OCI-LY7 (cell line): ENCODE measurements at regions of chr11 and their contacts with region 1.

Region 1: DNA sequence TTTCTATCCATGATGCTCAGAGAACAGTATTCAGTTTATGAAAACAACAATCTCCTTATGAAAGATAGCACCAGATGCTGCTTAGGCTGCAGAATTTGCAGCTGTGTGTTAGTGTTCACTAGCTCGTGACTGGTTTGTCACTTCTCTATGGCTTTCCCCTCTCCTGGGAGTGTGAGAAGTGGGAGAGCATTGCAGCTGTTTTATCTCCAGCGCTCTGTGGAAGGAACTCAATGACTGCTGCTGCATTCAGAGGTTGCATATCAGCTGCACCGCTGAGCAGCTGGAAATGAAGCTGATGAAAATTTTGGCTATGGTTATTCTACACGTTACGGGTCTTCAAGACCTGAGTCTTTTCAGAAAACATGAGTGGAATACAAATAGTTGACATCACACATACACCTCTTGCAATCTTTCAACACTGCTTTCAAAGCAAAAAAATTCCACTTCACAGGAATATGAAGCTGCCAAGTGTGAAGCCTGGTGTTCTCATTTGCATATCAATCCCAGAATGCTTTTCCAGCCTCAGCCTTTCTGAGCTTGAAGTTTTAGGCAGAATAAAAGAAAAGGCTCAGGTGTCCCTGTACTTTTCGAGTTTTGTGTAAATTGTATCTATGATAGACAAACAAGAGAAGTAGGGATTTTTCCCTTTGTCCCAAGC is 149.3 kb upstream of the DDI1 start:
- DNase-seq: peak; percentile 82
- H3K4me3 ChIP-seq: peak overlapping the region; percentile 31
- H3K27ac ChIP-seq: peak overlapping the region; percentile 46
- H3K4me1 ChIP-seq: peaks cover 31% of the 10 kb centered on the region
- CTCF ChIP-seq: no peak

Region 2: GRCh38 chr11:103875855-103876510 is 11.1 kb before region 1 on chr11:
- CTCF ChIA-PET with region 1: interaction called, 3 read pairs
- POLR2A ChIA-PET with region 1: interaction called, 23 read pairs
- intact Hi-C with region 1: no loop called
- DNase-seq: peak; percentile 70
- H3K4me3 ChIP-seq: no peak overlapping the region
- H3K27ac ChIP-seq: peak overlapping the region; percentile 47
- H3K4me1 ChIP-seq: peaks cover 23% of the 10 kb centered on the region
- CTCF ChIP-seq: no peak

Region 3: GRCh38 chr11:103898065-103898464 is 10.9 kb after region 1 on chr11:
- CTCF ChIA-PET with region 1: interaction called, 4 read pairs
- POLR2A ChIA-PET with region 1: interaction called, 16 read pairs
- intact Hi-C with region 1: no loop called
- DNase-seq: peak; percentile 62
- H3K4me3 ChIP-seq: peak overlapping the region; percentile 28
- H3K27ac ChIP-seq: peak overlapping the region; percentile 85
- H3K4me1 ChIP-seq: peaks cover 73% of the 10 kb centered on the region
- CTCF ChIP-seq: no peak